Activated naive CD4-positive, alpha-beta T cell treated with anti-CD3 and anti-CD28 coated beads for 36 hours (primary cell): ENCODE measurements at regions of chr3 and their contacts with region 1.

Region 1: DNA sequence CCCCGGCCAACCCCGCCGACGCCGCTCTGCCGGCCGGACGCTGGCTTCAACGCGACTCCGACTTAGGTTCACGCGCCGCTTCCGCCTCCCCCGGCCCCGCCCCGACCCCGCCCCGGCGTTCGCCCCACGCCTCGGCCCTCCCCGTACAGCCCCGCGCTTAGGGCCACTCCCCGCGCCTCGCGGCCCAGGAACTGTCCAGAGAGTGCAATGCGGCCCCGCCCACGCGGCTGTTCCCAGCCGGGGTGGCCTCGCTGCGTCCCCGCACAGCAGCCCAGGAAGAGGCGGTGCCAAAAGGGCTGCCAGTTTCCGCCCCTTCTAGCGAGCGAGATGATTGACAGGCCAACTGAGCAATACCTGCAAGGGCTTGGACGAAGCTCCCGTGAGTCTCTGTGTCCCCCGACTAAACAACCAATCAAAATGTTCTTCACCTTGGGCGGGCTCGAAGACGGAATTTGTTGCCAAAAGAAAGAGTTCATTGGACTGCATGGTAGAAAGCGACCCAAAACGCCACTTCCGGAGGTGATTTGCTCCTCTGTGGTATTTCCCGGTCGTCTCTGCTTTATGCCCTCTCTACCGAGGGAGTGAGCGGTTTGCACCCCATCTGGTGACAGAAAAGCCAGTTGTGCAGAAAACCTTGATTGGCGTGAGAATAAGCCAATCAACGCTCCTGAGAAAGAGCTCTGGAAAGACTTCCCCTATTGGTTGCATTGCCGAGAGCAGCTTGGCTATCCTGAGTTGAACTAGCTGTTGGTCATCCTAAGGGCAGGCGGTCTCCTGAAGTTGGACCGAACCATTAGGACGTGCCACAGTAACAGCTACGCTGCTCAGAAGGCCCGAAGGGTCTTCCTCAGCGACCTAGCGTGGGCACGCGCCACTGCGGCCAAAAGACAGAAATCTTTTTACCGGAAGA is at the start of gene UBP1:
- DNase-seq: peak; percentile 99
- H3K4me3 Mint-ChIP-seq: peak within 1 kb of the TSS; percentile 99
- H3K27ac Mint-ChIP-seq: peak within 1 kb of the TSS; percentile 100
- H3K4me1 Mint-ChIP-seq: peaks cover 34% of the 10 kb centered on the region
- H3K27me3 Mint-ChIP-seq: no peaks in the 10 kb centered on the region
- total RNA-seq, gene UBP1: 42.8 to 44.0 TPM

Region 2: DNA sequence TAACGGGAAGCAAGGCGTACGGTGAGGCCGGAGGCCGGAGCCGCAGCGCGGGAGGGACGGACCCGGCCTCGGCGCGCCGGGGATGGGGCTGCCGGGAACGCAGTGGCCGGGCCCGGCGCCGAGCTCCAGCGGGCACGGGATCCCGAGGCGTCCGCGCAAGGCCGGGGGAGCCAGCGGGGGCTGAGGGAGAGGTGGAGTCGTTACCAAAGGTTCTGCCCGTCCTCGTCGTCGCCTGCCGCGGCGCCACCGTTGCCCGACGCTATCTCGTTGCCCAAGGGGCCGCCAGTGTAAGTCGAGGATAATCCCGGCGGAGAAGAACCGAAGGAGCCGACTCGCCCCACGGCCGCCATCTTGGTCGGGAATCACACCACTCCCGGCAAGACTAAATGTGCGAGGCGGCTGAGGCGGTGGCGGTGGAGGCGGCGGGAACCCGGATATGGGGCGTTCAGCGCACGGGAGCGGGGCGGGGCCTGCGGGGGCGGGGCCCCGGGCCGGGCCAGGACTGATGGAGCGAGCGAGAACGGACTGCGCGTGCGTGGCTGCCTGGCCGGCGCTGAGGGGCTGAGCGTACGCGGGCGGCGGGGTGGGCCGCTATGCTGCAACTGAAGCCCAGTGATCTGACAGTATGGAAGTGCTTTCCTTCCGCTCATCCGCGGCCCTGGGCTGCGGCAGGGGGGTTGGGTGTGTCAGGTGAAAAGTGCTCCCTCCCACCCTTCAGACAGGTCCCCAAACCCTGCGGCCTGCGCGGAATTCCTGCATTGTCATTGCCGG is 870.0 kb before region 1 on chr3 and contains the start of gene DYNC1LI1:
- CTCF ChIA-PET with region 1: no interaction called
- intact Hi-C with region 1: loop called (anchors 1 kb)
- DNase-seq: peak; percentile 94
- H3K4me3 Mint-ChIP-seq: peak within 1 kb of the TSS; percentile 88
- H3K27ac Mint-ChIP-seq: peak within 1 kb of the TSS; percentile 88
- H3K4me1 Mint-ChIP-seq: peaks cover 19% of the 10 kb centered on the region
- H3K27me3 Mint-ChIP-seq: no peaks in the 10 kb centered on the region
- total RNA-seq, gene DYNC1LI1: 29.8 to 33.1 TPM

Region 3: DNA sequence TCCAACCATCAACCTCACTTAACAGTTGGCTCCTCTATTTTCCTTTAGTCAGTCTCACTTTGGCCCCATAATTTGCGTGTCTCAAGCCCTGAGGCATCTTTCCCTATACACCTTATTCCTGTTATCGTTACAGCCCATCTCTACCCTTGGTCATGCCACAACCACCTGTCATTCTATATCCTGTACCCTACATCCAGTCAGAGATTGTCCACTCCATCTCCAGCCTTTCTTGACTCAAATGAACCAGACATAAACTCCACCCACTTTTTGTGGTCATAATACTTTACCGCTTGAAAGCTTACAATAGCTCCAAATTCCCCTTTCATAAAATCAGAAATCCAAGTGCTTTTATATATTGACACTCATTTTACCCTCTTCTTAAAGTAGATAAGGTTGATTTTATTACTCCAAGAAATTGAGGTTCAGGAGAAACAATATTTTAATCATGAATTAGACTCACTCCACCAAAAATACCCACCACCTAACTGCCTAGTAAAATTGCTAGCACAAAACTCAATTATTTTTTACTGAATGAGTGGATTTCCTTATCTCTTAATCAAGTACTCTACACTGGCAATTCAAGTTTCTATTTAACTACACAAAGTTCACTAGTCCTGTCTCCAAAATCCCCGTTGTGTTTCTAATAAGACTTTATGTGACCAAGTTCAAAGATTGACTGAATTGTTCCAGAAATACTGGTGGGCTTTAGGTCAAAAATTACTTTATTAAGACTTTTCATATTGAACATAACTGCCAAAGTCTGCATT is 480.0 kb before region 1 on chr3:
- CTCF ChIA-PET with region 1: no interaction called
- intact Hi-C with region 1: loop called (anchors 2 kb)
- DNase-seq: no peak
- H3K4me3 Mint-ChIP-seq: no peak overlapping the region
- H3K27ac Mint-ChIP-seq: peak overlapping the region; percentile 75
- H3K4me1 Mint-ChIP-seq: peaks cover 61% of the 10 kb centered on the region
- H3K27me3 Mint-ChIP-seq: no peaks in the 10 kb centered on the region

Region 4: GRCh38 chr3:33113772-33114621 is 326.6 kb before region 1 on chr3 and contains the start of gene CRTAP:
- CTCF ChIA-PET with region 1: no interaction called
- intact Hi-C with region 1: loop called (anchors 1 kb)
- DNase-seq: peak; percentile 86
- H3K4me3 Mint-ChIP-seq: peak within 1 kb of the TSS; percentile 78
- H3K27ac Mint-ChIP-seq: no peak within 1 kb of the TSS
- H3K4me1 Mint-ChIP-seq: peaks cover 36% of the 10 kb centered on the region
- H3K27me3 Mint-ChIP-seq: no peaks in the 10 kb centered on the region
- total RNA-seq, gene CRTAP: 48.1 to 51.1 TPM

Region 5: DNA sequence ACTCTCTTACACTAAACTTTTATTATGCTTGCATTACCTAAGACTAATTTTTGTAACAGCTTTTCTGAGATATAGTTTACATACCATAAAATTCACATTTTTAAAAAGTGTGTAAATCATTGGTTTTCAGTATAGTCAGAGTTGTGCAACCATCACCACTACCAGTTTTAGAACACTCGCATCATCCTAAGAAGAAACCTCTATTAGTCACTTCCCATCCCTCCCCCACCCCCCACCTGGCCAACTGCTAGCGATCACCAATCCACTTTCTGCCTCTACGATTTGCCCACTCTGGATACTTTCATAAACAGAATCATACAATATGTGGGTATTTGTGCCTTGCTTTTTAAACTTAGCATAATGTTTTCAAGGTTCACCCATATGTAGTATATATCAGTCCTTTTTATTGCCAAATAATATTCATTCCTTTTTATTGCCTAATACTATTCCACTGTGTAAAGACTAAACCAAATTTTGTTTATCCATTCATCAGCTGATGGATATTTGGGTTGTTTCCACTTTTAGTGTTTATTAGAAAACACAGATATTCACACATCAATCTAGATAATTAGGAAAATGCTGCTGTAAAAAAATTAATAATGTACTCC is 23.4 kb before region 1 on chr3:
- CTCF ChIA-PET with region 1: interaction called, 5 read pairs
- intact Hi-C with region 1: loop called (anchors 1 kb)
- DNase-seq: peak; percentile 61
- H3K4me3 Mint-ChIP-seq: no peak overlapping the region
- H3K27ac Mint-ChIP-seq: peak overlapping the region; percentile 70
- H3K4me1 Mint-ChIP-seq: peaks cover 17% of the 10 kb centered on the region
- H3K27me3 Mint-ChIP-seq: no peaks in the 10 kb centered on the region

Region 6: DNA sequence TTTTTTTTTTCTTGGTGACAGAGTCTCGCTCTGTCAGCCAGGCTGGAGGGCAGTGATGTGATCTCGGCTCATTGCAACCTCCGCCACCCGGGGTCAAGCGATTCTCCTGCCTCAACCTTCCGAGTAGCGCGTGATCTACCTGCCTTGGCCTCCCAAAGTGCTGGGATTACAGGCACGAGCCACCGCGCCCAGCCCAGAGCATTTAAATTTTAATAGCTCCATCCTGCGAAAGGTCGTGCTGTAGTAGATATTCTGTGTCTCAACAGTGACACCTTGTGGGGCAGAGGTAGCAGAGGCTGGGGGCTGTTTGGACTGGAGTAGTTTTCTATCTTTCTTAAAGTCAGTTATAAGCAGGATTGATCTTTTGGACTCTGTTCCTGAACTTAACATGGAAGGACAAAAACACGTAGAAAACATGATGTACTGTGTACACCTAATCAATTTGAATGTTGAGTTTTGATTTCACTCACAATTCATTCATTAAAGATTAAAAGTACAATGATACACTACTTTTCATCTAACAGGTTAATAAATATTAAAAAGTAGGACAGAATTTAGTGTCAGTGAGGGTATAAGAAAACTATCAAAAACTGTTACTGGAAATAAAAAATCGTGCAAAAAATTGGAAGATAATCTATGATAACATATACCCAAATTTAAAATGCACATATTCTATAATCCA is 346.9 kb after region 1 on chr3:
- CTCF ChIA-PET with region 1: no interaction called
- intact Hi-C with region 1: loop called (anchors 2 kb)
- DNase-seq: peak; percentile 74
- H3K4me3 Mint-ChIP-seq: peak overlapping the region; percentile 48
- H3K27ac Mint-ChIP-seq: no peak overlapping the region
- H3K4me1 Mint-ChIP-seq: peaks cover 9% of the 10 kb centered on the region
- H3K27me3 Mint-ChIP-seq: no peaks in the 10 kb centered on the region